Activated T-helper 1 cell treated with anti-CD3 and anti-CD28 coated beads, Interleukin-12 subunit alpha, Interleukin-12 subunit beta, Interleukin-2, Interleukin-4 antibody, amounts not matched to agents 30 ng/mL and 10 ng/mL and 1 ng/mL, durations not matched to agents 14 hours and 24 hours and 36 hours (primary cell): ENCODE measurements at regions of chr1 and their contacts with region 1.

Region 1: GRCh38 chr1:39538588-39539465 is 37.8 kb downstream of the PABPC4 start:
- DNase-seq: peak; percentile 24
- H3K4me3 Mint-ChIP-seq: no peak overlapping the region
- H3K27ac Mint-ChIP-seq: no peak overlapping the region
- H3K4me1 Mint-ChIP-seq: peaks cover 7% of the 10 kb centered on the region
- H3K27me3 Mint-ChIP-seq: no peaks in the 10 kb centered on the region

Region 2: DNA sequence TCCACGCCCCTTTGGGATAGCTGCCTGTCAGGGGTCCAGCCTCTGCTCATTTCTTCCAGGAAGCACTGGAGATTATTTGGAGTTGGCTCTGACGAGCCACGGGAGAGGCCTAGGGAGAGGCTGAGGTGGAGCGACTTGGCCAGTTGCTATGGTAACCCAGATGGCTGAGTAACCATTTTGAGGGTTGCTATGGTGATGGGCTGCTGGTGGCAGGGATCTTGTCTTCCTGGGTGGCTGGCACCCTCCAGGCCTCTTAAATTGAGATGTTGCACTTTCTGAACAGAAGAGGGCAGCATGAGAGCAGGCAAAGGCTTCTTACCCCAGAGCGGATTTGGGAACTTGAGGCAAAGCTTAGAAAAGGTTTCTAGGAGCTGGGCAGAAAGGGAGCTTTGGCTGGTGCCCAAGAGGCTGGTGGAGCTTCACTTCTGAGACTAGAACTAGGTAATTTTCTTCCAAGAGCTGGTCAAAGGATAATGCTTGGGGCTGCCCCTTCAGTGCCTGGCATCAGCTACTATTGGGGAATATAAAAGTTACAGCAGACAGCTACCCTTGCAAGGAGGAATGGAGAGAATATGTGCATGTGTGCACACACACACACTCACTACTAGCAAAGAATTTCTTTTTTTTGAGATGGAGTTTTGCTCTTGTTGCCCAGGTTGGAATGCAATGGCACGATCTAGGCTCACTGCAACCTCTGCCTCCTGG is 440.1 kb before region 1 on chr1:
- intact Hi-C with region 1: loop called (anchors 1 kb)
- DNase-seq: peak; percentile 53
- H3K4me3 Mint-ChIP-seq: no peak overlapping the region
- H3K27ac Mint-ChIP-seq: peak overlapping the region; percentile 40
- H3K4me1 Mint-ChIP-seq: peaks cover 30% of the 10 kb centered on the region
- H3K27me3 Mint-ChIP-seq: peaks cover under 1% of the 10 kb centered on the region

Region 3: GRCh38 chr1:39491146-39491921 is 47.5 kb before region 1 on chr1 and contains the start of gene BMP8A:
- intact Hi-C with region 1: loop called (anchors 5 kb)
- DNase-seq: peak; percentile 69
- H3K4me3 Mint-ChIP-seq: peak within 1 kb of the TSS; percentile 75
- H3K27ac Mint-ChIP-seq: no peak within 1 kb of the TSS
- H3K4me1 Mint-ChIP-seq: peaks cover 11% of the 10 kb centered on the region
- H3K27me3 Mint-ChIP-seq: peaks cover 30% of the 10 kb centered on the region
- total RNA-seq, gene BMP8A: not detected in 2 replicates

Region 4: DNA sequence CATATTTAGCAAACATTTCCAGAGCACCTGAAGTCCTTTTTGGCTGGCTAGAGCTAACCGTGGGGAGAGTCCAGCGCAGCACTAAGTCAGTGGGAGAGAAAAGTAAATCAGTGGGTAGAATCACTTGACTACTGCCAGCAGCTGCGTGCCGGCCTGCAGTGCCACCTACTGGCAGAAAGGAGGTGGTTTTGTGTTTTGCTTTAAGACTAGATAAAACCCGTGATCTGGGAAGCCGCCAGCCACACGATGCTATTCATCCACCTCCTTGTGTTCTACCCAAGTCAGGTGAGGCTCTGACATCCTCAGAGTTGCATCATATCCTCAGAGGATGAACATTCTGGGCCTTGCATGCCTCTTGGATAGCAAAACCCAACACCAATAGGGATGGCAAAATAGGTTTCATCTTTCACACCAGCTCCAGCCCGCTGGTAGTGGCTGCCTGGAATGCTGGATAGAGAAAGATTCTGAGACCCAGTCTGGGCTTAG is 114.8 kb after region 1 on chr1:
- intact Hi-C with region 1: loop called (anchors 1 kb)
- DNase-seq: peak; percentile 67
- H3K4me3 Mint-ChIP-seq: no peak overlapping the region
- H3K27ac Mint-ChIP-seq: no peak overlapping the region
- H3K4me1 Mint-ChIP-seq: peaks cover 21% of the 10 kb centered on the region
- H3K27me3 Mint-ChIP-seq: peaks cover 3% of the 10 kb centered on the region